BJ (cell line): ENCODE measurements at regions of chr1 and their contacts with region 1.

Region 1: DNA sequence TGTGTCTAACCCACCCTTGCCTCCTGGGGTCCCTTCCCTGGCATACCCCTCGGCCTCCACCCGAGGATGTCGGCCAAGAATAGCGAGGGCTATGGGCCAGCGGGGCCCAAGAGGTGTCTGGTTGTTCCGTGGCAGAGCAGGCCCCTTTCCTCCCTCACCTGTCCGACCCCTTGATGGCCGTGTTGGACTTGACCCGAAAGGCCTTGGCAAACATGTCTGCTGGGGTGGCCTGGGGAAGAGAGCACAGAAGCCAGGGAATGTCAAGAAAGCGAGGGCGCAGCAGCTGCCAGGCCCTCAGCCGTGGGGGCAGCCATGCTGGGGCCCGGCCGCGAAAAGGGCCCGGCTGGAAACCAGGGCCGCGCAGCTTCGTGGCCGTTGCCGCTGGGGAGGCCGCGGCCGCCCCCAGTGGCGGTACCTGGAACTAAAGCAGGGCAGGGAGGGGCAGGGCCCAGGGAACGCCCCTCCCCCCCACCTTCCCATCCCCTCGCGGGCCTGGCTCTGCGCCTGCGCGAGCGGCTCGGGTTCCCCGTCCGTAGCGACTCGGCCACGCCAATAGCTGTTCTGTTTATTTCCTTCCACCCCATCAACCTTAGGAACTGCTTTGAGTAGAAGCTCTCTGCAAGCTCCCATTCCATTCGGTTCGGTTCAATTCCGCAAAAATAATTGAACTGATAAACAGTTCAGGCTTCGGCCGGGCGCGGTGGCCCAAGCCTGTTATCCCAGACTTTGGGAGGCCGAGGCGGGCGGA is at the start of gene EIF2D:
- DNase-seq: no peak
- H3K4me3 ChIP-seq: peak within 1 kb of the TSS; percentile 82
- H3K27me3 ChIP-seq: 0 out of 2 replicates have a peak, but pooled peaks cover 2% of the 10 kb centered on the region
- CTCF ChIP-seq: peak; percentile 87
- polyA plus RNA-seq, gene EIF2D: 88.7 and 97.4 TPM in 2 replicates

Region 2: GRCh38 chr1:206524739-206525369 is 87.4 kb before region 1 on chr1:
- CTCF ChIA-PET with region 1: no interaction called
- POLR2A ChIA-PET with region 1: no interaction called
- DNase-seq: no peak
- H3K4me3 ChIP-seq: no peak overlapping the region
- H3K27me3 ChIP-seq: peaks cover 3% of the 10 kb centered on the region
- CTCF ChIP-seq: no peak

Region 3: GRCh38 chr1:206635080-206635977 is 23.0 kb after region 1 on chr1 and contains the start of gene DYRK3:
- CTCF ChIA-PET with region 1: interaction called, 13 read pairs
- POLR2A ChIA-PET with region 1: interaction called, 5 read pairs
- DNase-seq: peak; percentile 46
- H3K4me3 ChIP-seq: peak within 1 kb of the TSS; percentile 83
- H3K27me3 ChIP-seq: no peaks in the 10 kb centered on the region
- CTCF ChIP-seq: 0 out of 2 replicates have a peak, but pooled peaks have one; percentile 13
- polyA plus RNA-seq, gene DYRK3: 7.4 and 10.8 TPM in 2 replicates

Region 4: DNA sequence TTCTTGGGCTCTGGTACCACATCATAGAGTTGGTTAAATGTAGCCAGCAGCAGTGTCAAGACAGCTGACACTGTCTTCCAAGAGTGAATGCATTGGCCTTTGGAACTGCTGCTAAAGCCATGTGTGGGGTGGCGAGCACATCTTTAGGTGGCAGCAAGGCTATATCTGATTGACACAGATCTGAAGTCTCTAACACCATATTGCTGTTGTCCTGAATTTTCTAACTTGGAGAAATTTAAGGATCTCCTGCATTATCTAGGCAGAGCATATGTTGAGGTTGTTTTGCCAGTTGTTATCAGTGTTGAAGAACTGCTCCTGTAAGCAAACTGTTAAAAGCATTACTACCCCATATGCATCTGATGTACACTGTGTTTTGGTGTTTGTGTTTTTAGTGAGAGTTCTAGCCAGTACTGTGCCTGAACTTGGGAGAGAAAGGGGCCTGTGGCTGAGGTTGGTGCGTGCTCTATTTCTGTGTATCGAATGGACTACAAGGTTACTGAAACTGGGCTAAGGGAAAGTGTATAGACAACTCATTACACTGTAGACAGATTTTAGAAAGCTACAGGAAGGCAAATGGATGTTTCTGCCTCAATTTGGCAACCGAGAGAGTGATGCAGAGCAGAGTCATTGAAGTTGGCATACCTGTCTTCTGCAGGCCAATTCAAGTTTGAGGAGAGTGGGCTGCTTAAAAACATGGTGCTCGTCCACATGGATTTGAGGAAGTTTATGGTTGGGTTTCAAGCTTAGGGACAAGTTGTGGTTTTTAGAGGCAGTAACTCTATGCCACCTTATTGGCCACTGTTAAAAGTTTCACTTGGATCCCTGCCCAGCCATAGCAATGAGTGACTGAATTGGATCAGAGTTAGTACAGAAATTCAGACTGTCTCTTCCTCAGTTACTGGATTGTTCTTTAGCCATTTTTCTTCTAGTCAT is 39.9 kb after region 1 on chr1:
- CTCF ChIA-PET with region 1: interaction called, 11 read pairs
- POLR2A ChIA-PET with region 1: no interaction called
- DNase-seq: no peak
- H3K4me3 ChIP-seq: no peak overlapping the region
- H3K27me3 ChIP-seq: no peaks in the 10 kb centered on the region
- CTCF ChIP-seq: no peak